ENCODE measurements at regions of chr3 and their contacts with region 1.

Region 1: GRCh38 chr3:48465531-48466378 is 19.2 kb downstream of the ATRIP start:
- DNase-seq: peak; percentile 100
- ATAC-seq: peak; percentile 92
- H3K4me3 ChIP-seq: peak overlapping the region; percentile 52
- H3K27ac ChIP-seq: peak overlapping the region; percentile 92
- H3K4me1 ChIP-seq: peaks cover 19% of the 10 kb centered on the region
- H3K27me3 ChIP-seq: no peaks in the 10 kb centered on the region
- CTCF ChIP-seq: peak; percentile 85
- POLR2A ChIP-seq: peak; percentile 65
- RAD21 ChIP-seq: peak; percentile 86

Region 2: DNA sequence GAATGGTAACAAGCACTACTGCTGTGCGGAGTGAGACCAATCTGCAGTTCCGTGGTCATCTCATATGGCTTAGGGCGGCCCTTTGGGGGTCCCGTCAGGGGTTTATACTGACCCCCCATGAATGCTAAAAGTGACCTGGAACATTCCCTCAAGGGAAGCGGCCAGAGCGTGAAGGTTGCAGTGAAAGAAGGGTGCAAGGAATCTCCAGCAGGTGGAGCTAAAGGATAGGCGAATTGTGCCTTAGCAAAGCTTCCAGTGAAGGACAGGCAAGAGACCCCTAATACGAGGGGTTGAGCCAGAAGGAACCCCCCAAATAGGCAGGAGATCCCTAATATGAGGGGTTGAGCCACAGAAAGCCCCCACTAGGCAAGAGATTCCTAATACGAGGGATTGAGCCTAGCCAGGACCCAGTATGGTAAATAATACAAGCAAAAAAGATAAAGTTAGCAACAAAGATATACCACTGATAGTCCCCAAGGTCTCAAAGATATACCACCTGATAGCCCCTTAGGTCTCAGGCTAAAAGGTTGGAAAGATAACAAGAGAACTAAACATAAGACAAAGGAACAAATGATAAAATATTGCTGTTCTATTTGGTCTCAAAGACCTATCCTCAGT is 192.1 kb before region 1 on chr3:
- CTCF ChIA-PET with region 1: no interaction called
- POLR2A ChIA-PET with region 1: no interaction called
- dilution Hi-C with region 1: no loop called
- in situ Hi-C with region 1: no loop called
- intact Hi-C with region 1: no loop called
- DNase-seq: peak; percentile 62
- ATAC-seq: peak; percentile 92
- H3K4me3 ChIP-seq: no peak overlapping the region
- H3K27ac ChIP-seq: no peak overlapping the region
- H3K4me1 ChIP-seq: no peaks in the 10 kb centered on the region
- H3K27me3 ChIP-seq: no peaks in the 10 kb centered on the region
- CTCF ChIP-seq: peak; percentile 85
- POLR2A ChIP-seq: 0 out of 2 replicates have a peak, but pooled peaks have one; percentile 31
- RAD21 ChIP-seq: peak; percentile 89

Region 3: GRCh38 chr3:48556793-48557626 is 91.3 kb after region 1 on chr3 and contains the start of gene PFKFB4:
- CTCF ChIA-PET with region 1: no interaction called
- POLR2A ChIA-PET with region 1: no interaction called
- dilution Hi-C with region 1: no loop called
- in situ Hi-C with region 1: loop called (anchors 5 kb)
- intact Hi-C with region 1: no loop called
- DNase-seq: peak; percentile 99
- ATAC-seq: peak; percentile 87
- H3K4me3 ChIP-seq: peak within 1 kb of the TSS; percentile 67
- H3K27ac ChIP-seq: peak within 1 kb of the TSS; percentile 67
- H3K4me1 ChIP-seq: peaks cover 32% of the 10 kb centered on the region
- H3K27me3 ChIP-seq: no peaks in the 10 kb centered on the region
- CTCF ChIP-seq: no peak
- POLR2A ChIP-seq: no peak
- RAD21 ChIP-seq: no peak
- total RNA-seq, gene PFKFB4: 16.1 and 17.0 TPM in 2 replicates

Region 4: GRCh38 chr3:48685602-48686511 is 220.1 kb after region 1 on chr3 and contains the start of gene NCKIPSD:
- CTCF ChIA-PET with region 1: no interaction called
- POLR2A ChIA-PET with region 1: no interaction called
- dilution Hi-C with region 1: no loop called
- in situ Hi-C with region 1: no loop called
- intact Hi-C with region 1: loop called (anchors 5 kb)
- DNase-seq: peak; percentile 69
- ATAC-seq: peak; percentile 86
- H3K4me3 ChIP-seq: peak within 1 kb of the TSS; percentile 99
- H3K27ac ChIP-seq: peak within 1 kb of the TSS; percentile 97
- H3K4me1 ChIP-seq: peaks cover 47% of the 10 kb centered on the region
- H3K27me3 ChIP-seq: no peaks in the 10 kb centered on the region
- CTCF ChIP-seq: peak; percentile 90
- POLR2A ChIP-seq: no peak
- RAD21 ChIP-seq: peak; percentile 79
- total RNA-seq, gene NCKIPSD: 21.0 and 21.9 TPM in 2 replicates

Region 5: DNA sequence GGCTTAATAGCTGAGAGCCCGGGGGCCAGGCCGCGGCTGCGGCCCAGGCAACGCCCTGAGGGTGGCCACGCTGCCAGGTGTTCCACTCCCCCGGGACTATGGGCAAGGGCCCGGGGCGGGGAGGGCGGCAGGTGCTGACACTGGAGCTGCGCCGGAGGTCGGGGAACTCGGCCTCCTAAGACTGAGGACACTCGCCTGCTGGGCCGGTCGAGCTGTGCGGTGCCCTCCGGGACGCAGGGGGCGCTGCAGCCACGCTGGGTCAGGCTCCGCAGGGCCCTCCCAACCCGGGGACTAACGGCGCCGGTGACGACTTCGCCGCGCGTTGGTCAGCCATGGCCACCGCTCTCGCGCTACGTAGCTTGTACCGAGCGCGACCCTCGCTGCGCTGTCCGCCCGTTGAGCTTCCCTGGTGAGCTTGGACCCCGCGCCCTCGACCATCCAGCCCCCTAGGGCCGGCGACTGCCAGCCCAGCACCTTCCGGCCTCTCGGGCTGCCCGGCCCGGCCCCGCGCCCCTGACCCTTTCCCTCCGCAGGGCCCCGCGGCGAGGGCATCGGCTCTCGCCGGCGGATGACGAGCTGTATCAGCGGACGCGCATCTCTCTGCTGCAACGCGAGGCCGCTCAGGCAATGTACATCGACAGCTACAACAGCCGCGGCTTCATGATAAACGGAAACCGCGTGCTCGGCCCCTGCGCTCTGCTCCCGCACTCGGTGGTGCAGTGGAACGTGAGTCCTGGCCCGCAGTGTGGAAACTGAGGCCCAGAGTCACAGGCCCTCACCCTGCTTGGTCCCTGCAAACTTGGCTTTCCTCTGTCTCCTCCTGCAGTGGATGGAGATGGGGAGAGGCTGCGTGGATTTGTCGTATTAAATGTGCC is 556.3 kb after region 1 on chr3 and contains the start of gene NDUFAF3:
- CTCF ChIA-PET with region 1: no interaction called
- POLR2A ChIA-PET with region 1: no interaction called
- dilution Hi-C with region 1: no loop called
- in situ Hi-C with region 1: no loop called
- intact Hi-C with region 1: no loop called
- DNase-seq: peak; percentile 92
- ATAC-seq: peak; percentile 74
- H3K4me3 ChIP-seq: peak within 1 kb of the TSS; percentile 84
- H3K27ac ChIP-seq: peak within 1 kb of the TSS; percentile 93
- H3K4me1 ChIP-seq: peaks cover 10% of the 10 kb centered on the region
- H3K27me3 ChIP-seq: no peaks in the 10 kb centered on the region
- CTCF ChIP-seq: peak; percentile 96
- POLR2A ChIP-seq: peak; percentile 40; the same call in 1 of the 2 replicates
- RAD21 ChIP-seq: no peak
- total RNA-seq, gene NDUFAF3: 26.5 and 43.3 TPM in 2 replicates